Mammary epithelial cell (primary cell): ENCODE measurements at regions of chr15 and their contacts with region 1.

Region 1: GRCh38 chr15:55799291-55800212 is 56.6 kb upstream of the PRTG start:
- DNase-seq: no peak
- H3K4me3 ChIP-seq: no peak overlapping the region
- H3K27ac ChIP-seq: no peak overlapping the region
- H3K4me1 ChIP-seq: peaks cover 4% of the 10 kb centered on the region
- H3K27me3 ChIP-seq: no peaks in the 10 kb centered on the region
- CTCF ChIP-seq: peak; percentile 52 to 69

Region 2: GRCh38 chr15:55654561-55655031 is 145.0 kb before region 1 on chr15:
- CTCF ChIA-PET with region 1: no interaction called
- dilution Hi-C with region 1: no loop called
- in situ Hi-C with region 1: loop called in 1 of 2 experiments (anchors 10 kb)
- intact Hi-C with region 1: no loop called
- DNase-seq: no peak
- H3K4me3 ChIP-seq: no peak overlapping the region
- H3K27ac ChIP-seq: no peak overlapping the region
- H3K4me1 ChIP-seq: no peaks in the 10 kb centered on the region
- H3K27me3 ChIP-seq: no peaks in the 10 kb centered on the region
- CTCF ChIP-seq: no peak

Region 3: DNA sequence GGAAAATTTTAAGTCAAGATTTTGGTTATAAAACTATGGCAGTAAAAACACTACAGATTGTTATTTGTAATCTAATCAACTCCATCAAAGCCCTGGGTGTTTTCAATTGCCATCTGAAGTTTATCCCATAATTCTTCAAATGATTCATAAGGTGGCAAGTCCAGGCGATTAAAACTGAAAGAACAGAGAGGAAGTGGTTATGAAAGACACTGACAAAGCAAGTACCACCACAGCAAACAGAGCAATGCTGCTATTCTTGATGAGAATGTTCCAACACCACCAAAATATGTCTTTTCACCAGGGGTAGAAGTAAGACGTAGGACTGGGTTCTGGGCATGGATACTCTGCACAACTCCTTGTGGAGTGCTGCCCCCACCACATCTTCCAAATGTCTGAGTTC is 30.3 kb after region 1 on chr15:
- CTCF ChIA-PET with region 1: no interaction called
- dilution Hi-C with region 1: loop called (anchors 5 kb)
- in situ Hi-C with region 1: no loop called
- intact Hi-C with region 1: no loop called
- DNase-seq: peak; percentile 78
- H3K4me3 ChIP-seq: no peak overlapping the region
- H3K27ac ChIP-seq: no peak overlapping the region
- H3K4me1 ChIP-seq: peaks cover 32% of the 10 kb centered on the region
- H3K27me3 ChIP-seq: no peaks in the 10 kb centered on the region
- CTCF ChIP-seq: no peak